GM12878 (cell line): ENCODE measurements at regions of chr9 and their contacts with region 1.

Region 1: DNA sequence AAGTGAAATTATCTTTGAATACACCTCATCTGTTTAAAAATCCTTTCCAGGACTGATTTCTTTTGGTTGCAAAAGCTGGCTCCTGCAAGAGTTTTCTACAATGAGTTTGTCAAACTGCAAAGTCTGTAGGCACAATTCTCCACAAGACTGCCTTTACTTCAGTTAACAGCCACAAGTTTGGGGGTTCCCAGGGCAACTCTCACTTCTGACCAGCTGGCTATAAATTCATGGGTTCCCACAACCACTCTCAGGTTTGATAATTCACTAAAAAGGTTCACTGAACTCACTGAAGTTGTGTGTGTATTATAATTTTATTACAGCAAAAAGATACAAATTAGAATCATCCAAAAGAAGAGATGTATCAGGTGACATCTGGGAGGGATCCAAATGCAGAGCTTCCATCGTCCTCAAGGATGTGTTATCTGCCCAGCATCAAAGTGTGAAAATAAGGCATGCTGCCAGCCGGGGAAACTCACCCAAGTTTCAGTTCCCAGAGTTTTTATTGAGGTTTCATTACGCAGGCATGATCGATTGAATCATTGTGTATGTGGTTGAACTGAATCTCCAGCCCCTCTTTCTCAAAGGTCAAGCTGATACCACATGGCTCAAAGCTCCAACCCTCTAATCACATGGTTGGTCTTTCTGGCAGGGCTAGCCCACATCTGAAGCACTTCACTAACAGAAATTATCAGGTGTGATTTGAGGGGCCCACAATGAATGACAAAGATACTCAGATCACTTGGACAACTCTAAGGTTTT is 19.0 kb upstream of the PSIP1 start:
- DNase-seq: peak; percentile 94
- ATAC-seq: peak; percentile 89
- H3K4me3 ChIP-seq: no peak overlapping the region
- H3K27ac ChIP-seq: peak overlapping the region; percentile 85
- H3K4me1 ChIP-seq: peaks cover 25% of the 10 kb centered on the region
- H3K27me3 ChIP-seq: no peaks in the 10 kb centered on the region
- CTCF ChIP-seq: no peak
- EP300 ChIP-seq: peak; percentile 63 to 64; a peak in 3 of 4 replicates
- POLR2A ChIP-seq: no peak
- RAD21 ChIP-seq: no peak; the same call in 1 of the 2 replicates

Region 2: DNA sequence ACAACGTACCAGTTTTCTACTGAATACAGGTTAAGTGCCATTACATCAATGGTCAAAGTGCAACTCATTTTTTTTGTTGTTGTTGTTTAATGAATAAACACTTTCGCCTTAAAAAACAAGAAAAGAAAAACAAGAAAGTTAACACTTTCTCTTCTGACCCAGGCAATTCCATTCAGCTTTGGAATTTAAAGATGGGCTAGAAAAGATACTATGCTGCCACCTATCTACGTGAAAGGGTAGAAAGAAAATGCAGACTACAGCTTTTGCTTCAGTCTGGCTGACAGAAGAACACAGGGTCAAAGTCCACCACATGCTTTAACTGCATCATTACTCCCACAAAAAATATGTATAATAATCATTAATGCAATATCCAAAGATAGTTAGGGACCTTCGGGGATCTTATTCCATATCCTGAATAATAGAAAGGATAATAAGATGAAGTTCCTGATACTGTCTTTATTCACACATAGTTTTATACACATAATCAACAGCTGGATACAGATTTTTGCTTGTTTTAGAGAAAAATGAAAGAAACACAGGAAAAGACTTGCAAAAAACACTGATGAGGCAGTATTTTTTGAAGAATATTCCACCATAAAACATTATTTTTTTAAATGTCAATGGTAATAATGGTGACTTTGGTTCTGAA is 876.9 kb before region 1 on chr9:
- CTCF ChIA-PET with region 1: no interaction called
- POLR2A ChIA-PET with region 1: no interaction called
- RAD21 ChIA-PET with region 1: no interaction called
- SMC1A ChIA-PET with region 1: no interaction called
- in situ Hi-C with region 1: no loop called
- intact Hi-C with region 1: no loop called
- DNase-seq: no peak
- ATAC-seq: peak; percentile 68
- H3K4me3 ChIP-seq: no peak overlapping the region
- H3K27ac ChIP-seq: no peak overlapping the region
- H3K4me1 ChIP-seq: no peaks in the 10 kb centered on the region
- H3K27me3 ChIP-seq: no peaks in the 10 kb centered on the region
- CTCF ChIP-seq: peak; percentile 24 to 39 (median 33); a peak in 4 of 6 replicates
- EP300 ChIP-seq: no peak
- POLR2A ChIP-seq: no peak
- RAD21 ChIP-seq: no peak

Region 3: DNA sequence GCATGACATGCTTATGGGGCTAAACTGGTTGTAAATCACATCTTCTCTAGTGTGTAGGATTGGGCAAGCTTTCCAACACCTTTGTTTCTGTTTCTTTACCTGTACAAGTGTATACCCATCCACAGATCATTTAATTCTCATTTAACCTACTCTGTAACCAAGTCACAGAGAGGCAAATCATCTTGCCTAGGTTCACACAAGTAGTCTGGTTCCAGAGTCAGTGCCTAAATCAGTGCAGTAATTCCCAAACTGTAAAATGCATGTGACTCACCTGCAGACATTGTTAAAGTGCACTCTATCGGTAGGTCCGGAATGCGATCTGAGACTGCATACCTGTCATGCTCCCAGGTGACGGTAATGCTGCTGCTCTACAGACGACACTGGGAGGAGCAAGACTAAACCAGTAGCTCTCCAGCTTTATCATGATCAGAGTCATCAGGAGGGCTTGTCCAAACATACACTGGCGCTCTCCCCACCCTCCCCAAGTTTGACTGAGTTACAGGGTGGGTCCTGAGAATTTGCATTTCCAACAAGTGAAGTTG is 511.6 kb before region 1 on chr9:
- CTCF ChIA-PET with region 1: no interaction called
- POLR2A ChIA-PET with region 1: no interaction called
- RAD21 ChIA-PET with region 1: no interaction called
- SMC1A ChIA-PET with region 1: no interaction called
- in situ Hi-C with region 1: no loop called
- intact Hi-C with region 1: no loop called
- DNase-seq: no peak
- ATAC-seq: no peak
- H3K4me3 ChIP-seq: no peak overlapping the region
- H3K27ac ChIP-seq: no peak overlapping the region
- H3K4me1 ChIP-seq: no peaks in the 10 kb centered on the region
- H3K27me3 ChIP-seq: no peaks in the 10 kb centered on the region
- CTCF ChIP-seq: no peak
- EP300 ChIP-seq: no peak
- POLR2A ChIP-seq: no peak
- RAD21 ChIP-seq: no peak

Region 4: GRCh38 chr9:15116130-15116580 is 413.6 kb before region 1 on chr9:
- CTCF ChIA-PET with region 1: no interaction called
- POLR2A ChIA-PET with region 1: no interaction called
- RAD21 ChIA-PET with region 1: no interaction called
- SMC1A ChIA-PET with region 1: no interaction called
- in situ Hi-C with region 1: no loop called
- intact Hi-C with region 1: no loop called
- DNase-seq: no peak
- ATAC-seq: no peak
- H3K4me3 ChIP-seq: no peak overlapping the region
- H3K27ac ChIP-seq: no peak overlapping the region
- H3K4me1 ChIP-seq: no peaks in the 10 kb centered on the region
- H3K27me3 ChIP-seq: no peaks in the 10 kb centered on the region
- CTCF ChIP-seq: no peak
- EP300 ChIP-seq: no peak
- POLR2A ChIP-seq: no peak
- RAD21 ChIP-seq: no peak

Region 5: DNA sequence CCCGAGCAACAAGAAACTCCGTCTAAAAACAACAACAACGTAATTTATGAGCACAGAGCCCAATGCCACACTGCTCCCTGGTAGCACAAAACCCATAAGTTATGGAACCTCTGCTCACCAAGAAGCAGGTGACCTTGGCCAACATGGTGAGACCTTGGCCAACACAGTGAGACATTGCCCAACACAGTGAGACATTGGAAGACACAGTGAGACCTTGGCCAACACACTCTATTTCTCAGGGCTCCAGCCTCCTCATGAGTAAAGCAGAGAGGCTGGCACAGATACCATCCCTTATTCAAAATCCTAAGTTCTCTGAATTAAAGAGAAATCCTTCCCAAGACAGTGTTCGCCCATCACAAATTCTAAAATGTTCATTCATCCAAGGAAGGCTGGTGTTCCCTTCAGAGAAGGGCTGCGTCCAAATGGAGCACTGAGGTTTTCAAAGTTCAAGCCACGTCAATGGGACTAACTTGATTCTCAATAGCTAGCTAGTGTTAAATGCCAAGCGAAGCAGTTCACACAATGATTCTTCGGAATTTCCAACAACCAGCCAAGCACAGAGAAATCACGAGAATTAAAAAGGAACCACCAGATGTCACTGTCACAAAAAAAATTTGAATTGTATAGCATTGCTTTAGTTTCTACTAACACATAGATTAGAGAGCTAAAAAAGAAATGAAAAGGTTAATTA is 252.2 kb before region 1 on chr9:
- CTCF ChIA-PET with region 1: interaction called, 9 read pairs
- POLR2A ChIA-PET with region 1: no interaction called
- RAD21 ChIA-PET with region 1: interaction called, 7 read pairs
- SMC1A ChIA-PET with region 1: interaction called, 10 read pairs
- in situ Hi-C with region 1: no loop called
- intact Hi-C with region 1: loop called (anchors 10 kb)
- DNase-seq: no peak
- ATAC-seq: peak; percentile 73
- H3K4me3 ChIP-seq: no peak overlapping the region
- H3K27ac ChIP-seq: no peak overlapping the region
- H3K4me1 ChIP-seq: no peaks in the 10 kb centered on the region
- H3K27me3 ChIP-seq: no peaks in the 10 kb centered on the region
- CTCF ChIP-seq: peak; percentile 12 to 49 (median 27); a peak in 4 of 6 replicates
- EP300 ChIP-seq: no peak
- POLR2A ChIP-seq: no peak
- RAD21 ChIP-seq: peak; percentile 58

Region 6: GRCh38 chr9:15469406-15469805 is 60.3 kb before region 1 on chr9:
- CTCF ChIA-PET with region 1: interaction called, 34 read pairs
- POLR2A ChIA-PET with region 1: interaction called, 3 read pairs
- RAD21 ChIA-PET with region 1: interaction called, 10 read pairs
- SMC1A ChIA-PET with region 1: interaction called, 28 read pairs
- in situ Hi-C with region 1: no loop called
- intact Hi-C with region 1: no loop called
- DNase-seq: no peak
- ATAC-seq: no peak
- H3K4me3 ChIP-seq: no peak overlapping the region
- H3K27ac ChIP-seq: no peak overlapping the region
- H3K4me1 ChIP-seq: no peaks in the 10 kb centered on the region
- H3K27me3 ChIP-seq: no peaks in the 10 kb centered on the region
- CTCF ChIP-seq: no peak
- EP300 ChIP-seq: no peak
- POLR2A ChIP-seq: no peak
- RAD21 ChIP-seq: no peak

Region 7: DNA sequence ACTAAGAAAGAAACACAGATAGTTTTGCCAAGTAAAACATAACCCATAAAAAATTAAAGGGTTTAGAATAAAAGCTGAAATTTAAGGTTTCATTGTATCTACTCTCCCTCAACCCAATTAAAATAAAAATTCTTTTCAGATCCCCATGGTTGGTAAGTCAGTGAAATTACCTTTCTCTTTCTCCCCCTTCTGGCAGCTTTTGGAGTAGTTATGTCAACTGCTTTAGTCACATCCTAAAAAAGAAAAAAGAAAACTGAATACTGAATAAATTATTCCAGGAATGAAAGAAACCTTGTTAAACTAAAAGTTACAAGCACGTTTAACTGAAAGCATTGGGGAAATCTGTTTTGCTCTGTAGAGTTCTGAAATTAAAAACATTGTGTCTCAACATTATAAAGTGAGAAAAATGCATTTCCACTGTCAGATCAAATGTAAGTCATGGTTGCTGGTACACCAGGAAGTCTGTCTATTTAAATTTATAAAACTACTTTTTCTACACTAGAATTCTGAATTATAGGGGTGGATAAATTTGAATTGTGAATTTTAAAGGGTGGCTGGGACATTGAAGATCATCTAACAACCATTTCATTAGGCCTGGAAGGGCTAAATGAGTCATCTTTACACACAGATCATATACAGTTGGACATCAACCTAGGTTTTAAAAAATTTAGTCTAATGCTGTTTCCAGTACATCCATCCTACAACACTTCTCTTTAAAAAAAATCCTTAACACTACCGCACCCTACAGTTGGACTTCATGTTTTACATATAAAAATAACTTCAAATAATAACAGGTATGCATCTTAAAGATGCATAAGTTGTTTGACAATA is 43.7 kb before region 1 on chr9:
- CTCF ChIA-PET with region 1: interaction called, 7 read pairs
- POLR2A ChIA-PET with region 1: interaction called, 4 read pairs
- RAD21 ChIA-PET with region 1: interaction called, 4 read pairs
- SMC1A ChIA-PET with region 1: interaction called, 29 read pairs
- in situ Hi-C with region 1: no loop called
- intact Hi-C with region 1: loop called (anchors 5 kb)
- DNase-seq: no peak
- ATAC-seq: peak; percentile 58
- H3K4me3 ChIP-seq: no peak overlapping the region
- H3K27ac ChIP-seq: no peak overlapping the region
- H3K4me1 ChIP-seq: no peaks in the 10 kb centered on the region
- H3K27me3 ChIP-seq: no peaks in the 10 kb centered on the region
- CTCF ChIP-seq: peak; percentile 31 to 46 (median 36); a peak in 5 of 6 replicates
- EP300 ChIP-seq: no peak
- POLR2A ChIP-seq: no peak
- RAD21 ChIP-seq: 0 out of 2 replicates have a peak, but pooled peaks have one; percentile 26

Region 8: DNA sequence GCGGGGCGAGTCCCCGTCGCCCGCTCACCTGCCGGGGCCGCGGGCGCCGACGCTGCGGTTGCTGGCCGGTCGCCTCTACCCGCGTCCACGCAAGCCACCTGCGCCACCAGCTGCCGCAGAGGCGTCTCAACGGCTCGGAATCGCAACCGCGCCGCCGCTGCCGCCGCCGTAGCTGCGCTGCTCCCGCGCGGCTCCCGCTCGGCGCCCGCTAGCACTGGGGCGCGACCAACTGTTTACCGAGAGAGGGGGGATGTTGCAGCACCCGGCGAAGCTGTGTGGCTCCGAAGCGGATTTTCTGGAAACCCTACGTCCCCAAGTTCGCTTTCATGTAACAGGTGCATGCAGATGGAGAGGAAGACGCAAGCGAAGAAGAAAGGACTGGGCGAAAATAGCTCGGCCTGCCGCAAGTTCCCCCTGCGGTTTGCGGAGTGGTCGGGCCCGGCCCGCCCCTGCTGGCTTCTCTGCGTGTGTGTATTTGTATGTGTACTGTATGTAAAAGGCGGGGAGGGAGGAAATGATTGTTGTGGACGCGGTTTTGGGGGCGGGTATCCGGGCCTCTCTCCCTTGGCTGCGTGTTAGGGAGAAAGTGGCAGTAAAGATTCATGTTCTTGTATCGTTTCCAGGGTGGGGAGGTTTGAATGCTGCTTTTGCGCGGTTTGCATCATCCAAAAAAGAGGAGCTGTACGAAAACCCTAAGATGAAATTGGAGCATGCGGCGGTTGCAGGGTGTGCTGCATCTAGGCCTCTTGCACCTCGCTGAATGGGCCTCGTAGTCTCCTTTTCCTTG is 18.8 kb before region 1 on chr9 and contains the start of gene PSIP1:
- CTCF ChIA-PET with region 1: interaction called, 133 read pairs
- POLR2A ChIA-PET with region 1: interaction called, 70 read pairs
- RAD21 ChIA-PET with region 1: interaction called, 106 read pairs
- SMC1A ChIA-PET with region 1: interaction called, 163 read pairs
- in situ Hi-C with region 1: no loop called
- intact Hi-C with region 1: loop called (anchors 1 kb)
- DNase-seq: peak; percentile 85
- ATAC-seq: peak; percentile 75
- H3K4me3 ChIP-seq: peak within 1 kb of the TSS; percentile 93
- H3K27ac ChIP-seq: peak within 1 kb of the TSS; percentile 99
- H3K4me1 ChIP-seq: peaks cover 13% of the 10 kb centered on the region
- H3K27me3 ChIP-seq: no peaks in the 10 kb centered on the region
- CTCF ChIP-seq: no peak
- EP300 ChIP-seq: peak; percentile 57 to 77; a peak in 2 of 4 replicates
- POLR2A ChIP-seq: peak; percentile 95
- RAD21 ChIP-seq: no peak; the same call in 1 of the 2 replicates
- polyA plus RNA-seq, gene PSIP1: 75.5 to 115 TPM